ENCODE measurements at regions of chr11 and their contacts with region 1.

Region 1: GRCh38 chr11:28836285-28837081 is 728.3 kb downstream of the METTL15 start:
- DNase-seq: peak; percentile 88
- H3K4me3 ChIP-seq: no peak overlapping the region
- H3K27ac ChIP-seq: peak overlapping the region; percentile 73
- H3K4me1 ChIP-seq: peaks cover 46% of the 10 kb centered on the region
- H3K27me3 ChIP-seq: no peaks in the 10 kb centered on the region
- CTCF ChIP-seq: no peak

Region 2: GRCh38 chr11:27241311-27242122 is 1595.0 kb before region 1 on chr11:
- CTCF ChIA-PET with region 1: no interaction called
- dilution Hi-C with region 1: no loop called
- in situ Hi-C with region 1: no loop called
- intact Hi-C with region 1: loop called (anchors 10 kb)
- DNase-seq: peak; percentile 92
- H3K4me3 ChIP-seq: no peak overlapping the region
- H3K27ac ChIP-seq: no peak overlapping the region
- H3K4me1 ChIP-seq: peaks cover 15% of the 10 kb centered on the region
- H3K27me3 ChIP-seq: no peaks in the 10 kb centered on the region
- CTCF ChIP-seq: no peak

Region 3: GRCh38 chr11:28860893-28861292 is 24.4 kb after region 1 on chr11:
- CTCF ChIA-PET with region 1: no interaction called
- dilution Hi-C with region 1: no loop called
- in situ Hi-C with region 1: no loop called
- intact Hi-C with region 1: loop called (anchors 1 kb)
- DNase-seq: peak; percentile 53
- H3K4me3 ChIP-seq: no peak overlapping the region
- H3K27ac ChIP-seq: no peak overlapping the region
- H3K4me1 ChIP-seq: peaks cover 19% of the 10 kb centered on the region
- H3K27me3 ChIP-seq: no peaks in the 10 kb centered on the region
- CTCF ChIP-seq: no peak

Measured in mammary epithelial cell (primary cell).